WTC11 (cell line): ENCODE measurements at regions of chr12 and their contacts with region 1.

Region 1: DNA sequence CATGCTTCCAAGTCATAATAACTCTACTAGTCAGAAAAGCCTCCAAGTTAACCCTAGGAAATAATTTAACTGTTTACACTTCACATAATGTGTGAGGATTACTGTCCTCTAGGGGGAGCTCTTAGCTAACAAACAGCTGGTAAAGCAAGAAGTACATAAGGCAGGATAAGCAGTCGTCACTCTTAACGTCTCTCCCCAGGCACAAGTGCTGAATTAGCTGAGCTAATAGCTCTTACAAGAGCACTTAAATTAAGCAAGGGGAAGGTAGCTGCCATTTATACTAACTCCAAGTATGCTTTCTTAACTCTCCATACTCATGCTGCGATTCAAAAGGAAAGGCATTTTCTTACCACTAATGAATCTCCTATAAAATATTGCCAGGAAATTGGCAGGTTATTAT is 79.3 kb upstream of the TSPAN11 start:
- DNase-seq: no peak
- ATAC-seq: no peak
- H3K4me3 Mint-ChIP-seq: no peak overlapping the region
- H3K27ac Mint-ChIP-seq: no peak overlapping the region
- H3K4me1 Mint-ChIP-seq: peaks cover 35% of the 10 kb centered on the region
- H3K27me3 Mint-ChIP-seq: peaks cover 4% of the 10 kb centered on the region; the same call in 1 of the 2 replicates
- CTCF ChIP-seq: peak; percentile 50

Region 2: DNA sequence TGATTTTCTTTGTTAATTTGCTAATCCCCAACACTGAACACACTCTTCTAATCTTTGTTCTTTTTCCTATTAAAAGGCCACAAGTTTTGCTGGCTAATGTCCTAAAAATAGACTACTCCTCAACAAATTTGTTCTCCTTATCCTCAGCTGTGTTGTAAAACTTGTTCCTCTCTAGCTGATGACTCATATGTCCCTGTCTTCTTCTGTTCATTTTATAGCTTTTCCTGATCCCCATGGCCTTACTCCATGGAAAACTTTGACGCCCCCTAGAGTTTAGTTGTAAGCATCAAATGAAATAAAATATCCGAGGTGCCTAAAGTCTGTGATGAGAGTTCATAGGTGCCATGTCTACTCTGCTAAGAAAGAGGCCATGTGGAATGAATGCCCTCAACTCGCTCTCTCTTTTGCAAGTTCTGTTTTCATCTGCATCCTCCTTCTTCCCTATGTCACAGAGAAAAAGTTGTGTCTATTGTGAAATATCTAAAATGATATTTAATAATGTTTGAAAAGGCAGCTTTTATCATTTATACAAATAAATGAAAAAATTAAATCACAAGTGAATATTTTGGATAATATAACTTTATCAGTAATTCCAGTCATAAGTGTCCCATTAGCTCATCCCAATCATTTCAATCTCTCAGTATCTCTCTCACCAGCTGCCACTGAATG is 389.5 kb before region 1 on chr12:
- CTCF ChIA-PET with region 1: no interaction called
- POLR2A ChIA-PET with region 1: no interaction called
- DNase-seq: no peak
- ATAC-seq: peak; percentile 66
- H3K4me3 Mint-ChIP-seq: no peak overlapping the region
- H3K27ac Mint-ChIP-seq: no peak overlapping the region
- H3K4me1 Mint-ChIP-seq: no peaks in the 10 kb centered on the region
- H3K27me3 Mint-ChIP-seq: no peaks in the 10 kb centered on the region
- CTCF ChIP-seq: no peak

Region 3: GRCh38 chr12:30806989-30807694 is 40.1 kb before region 1 on chr12:
- CTCF ChIA-PET with region 1: no interaction called
- POLR2A ChIA-PET with region 1: no interaction called
- DNase-seq: peak; percentile 37
- ATAC-seq: peak; percentile 90
- H3K4me3 Mint-ChIP-seq: 0 out of 2 replicates have a peak overlapping the region, but pooled peaks have one; percentile 10
- H3K27ac Mint-ChIP-seq: no peak overlapping the region
- H3K4me1 Mint-ChIP-seq: peaks cover 27% of the 10 kb centered on the region
- H3K27me3 Mint-ChIP-seq: peaks cover 34% of the 10 kb centered on the region
- CTCF ChIP-seq: peak; percentile 47; the same call in 1 of the 2 replicates

Region 4: DNA sequence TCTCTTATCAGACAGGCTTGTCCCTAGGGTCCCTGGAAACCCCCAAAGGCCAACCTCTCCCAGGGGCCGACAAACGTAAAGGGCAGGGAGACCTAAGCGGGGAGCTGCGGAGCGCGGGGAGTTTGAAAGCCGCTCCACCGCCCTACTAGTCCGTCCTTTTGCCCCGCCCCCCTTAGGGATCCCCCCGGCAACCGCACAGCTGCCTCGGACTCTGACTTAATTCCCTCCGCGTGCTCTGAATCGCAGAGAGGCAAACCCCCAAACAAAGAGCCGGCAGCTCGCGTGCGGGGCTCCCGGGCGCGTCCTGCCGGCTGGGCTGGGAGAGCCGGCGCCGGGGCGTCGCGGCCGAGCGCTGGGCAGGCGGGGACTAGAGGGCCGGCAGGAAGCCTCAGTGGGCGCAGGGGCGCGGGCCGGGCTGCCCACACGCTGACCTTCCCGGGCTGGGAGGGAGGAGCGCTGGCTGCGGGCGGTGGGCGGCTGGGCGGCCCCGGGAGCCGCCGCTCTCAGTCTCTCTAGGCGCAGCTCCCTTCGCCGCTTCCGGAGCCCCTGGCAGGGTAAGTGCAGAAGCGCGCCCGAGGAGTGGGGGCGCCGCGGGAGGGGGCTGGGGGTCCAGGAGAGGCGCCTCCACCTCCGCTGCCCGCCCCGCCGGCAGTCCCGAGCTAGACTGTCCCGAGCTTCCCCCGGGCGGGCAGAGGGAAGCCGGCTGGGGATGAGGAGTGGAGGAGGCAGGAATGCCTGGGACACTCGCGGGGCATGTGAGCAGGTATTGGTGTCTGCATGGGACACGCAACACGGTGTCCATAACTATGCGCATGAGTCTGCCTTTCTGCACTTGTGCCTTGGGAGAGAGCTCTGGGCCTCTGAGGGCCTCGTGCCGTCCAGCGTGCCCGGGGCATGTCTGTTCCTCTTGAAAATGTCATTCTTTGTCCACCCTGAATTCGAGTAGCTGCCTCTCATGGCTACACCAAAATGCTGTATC is 79.3 kb after region 1 on chr12 and contains the start of gene TSPAN11:
- CTCF ChIA-PET with region 1: interaction called, 16 read pairs
- POLR2A ChIA-PET with region 1: no interaction called
- DNase-seq: peak; percentile 79
- ATAC-seq: peak; percentile 78
- H3K4me3 Mint-ChIP-seq: peak within 1 kb of the TSS; percentile 62
- H3K27ac Mint-ChIP-seq: no peak within 1 kb of the TSS
- H3K4me1 Mint-ChIP-seq: peaks cover 45% of the 10 kb centered on the region
- H3K27me3 Mint-ChIP-seq: peaks cover 46% of the 10 kb centered on the region
- CTCF ChIP-seq: no peak
- total RNA-seq, gene TSPAN11: 4.6 to 6.1 TPM (median 5.3 TPM) in 3 replicates

Region 5: DNA sequence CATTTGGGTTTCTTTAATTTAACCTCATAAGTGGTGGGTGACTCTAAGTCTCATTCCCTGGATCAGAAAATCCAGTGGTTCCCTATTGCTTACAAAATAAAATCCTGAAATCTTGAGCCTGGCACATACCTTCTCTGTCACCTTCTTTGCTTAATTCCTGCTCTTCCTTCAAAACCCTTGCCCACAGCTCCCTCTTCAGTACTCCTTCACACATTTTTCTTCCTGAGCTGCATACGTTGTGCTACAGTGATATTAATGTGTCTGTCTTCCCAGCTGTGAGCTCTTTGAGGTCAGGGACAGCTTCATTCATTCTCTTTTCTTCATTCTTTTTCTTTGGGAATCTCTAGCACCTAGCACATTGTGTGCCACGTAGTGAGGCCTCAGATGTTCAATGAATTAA is 88.8 kb after region 1 on chr12:
- CTCF ChIA-PET with region 1: interaction called, 13 read pairs
- POLR2A ChIA-PET with region 1: no interaction called
- DNase-seq: no peak
- ATAC-seq: no peak
- H3K4me3 Mint-ChIP-seq: no peak overlapping the region
- H3K27ac Mint-ChIP-seq: no peak overlapping the region
- H3K4me1 Mint-ChIP-seq: peaks cover 9% of the 10 kb centered on the region
- H3K27me3 Mint-ChIP-seq: peaks cover 5% of the 10 kb centered on the region
- CTCF ChIP-seq: no peak

Region 6: DNA sequence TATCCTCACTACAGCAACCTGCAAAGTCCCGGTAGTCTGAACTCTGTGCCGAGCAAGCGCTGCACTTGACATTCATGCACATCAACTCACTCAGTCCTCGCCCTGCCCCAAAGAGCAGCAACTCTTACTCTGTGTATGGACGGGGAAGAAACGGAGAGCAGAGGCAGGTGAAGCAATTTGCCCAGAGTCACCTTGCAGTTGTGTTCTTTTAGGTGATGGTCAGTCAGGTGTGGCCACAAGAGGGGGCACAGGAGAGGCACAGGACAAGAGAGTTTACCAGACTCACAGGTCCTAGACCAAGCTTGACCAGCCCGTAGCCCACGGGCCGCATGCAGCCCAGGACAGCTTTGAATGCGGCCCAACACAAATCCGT is 118.3 kb after region 1 on chr12:
- CTCF ChIA-PET with region 1: interaction called, 13 read pairs
- POLR2A ChIA-PET with region 1: no interaction called
- DNase-seq: peak; percentile 60
- ATAC-seq: peak; percentile 77
- H3K4me3 Mint-ChIP-seq: no peak overlapping the region
- H3K27ac Mint-ChIP-seq: no peak overlapping the region
- H3K4me1 Mint-ChIP-seq: peaks cover 8% of the 10 kb centered on the region; the same call in 1 of the 2 replicates
- H3K27me3 Mint-ChIP-seq: no peaks in the 10 kb centered on the region; the same call in 1 of the 2 replicates
- CTCF ChIP-seq: no peak

Region 7: DNA sequence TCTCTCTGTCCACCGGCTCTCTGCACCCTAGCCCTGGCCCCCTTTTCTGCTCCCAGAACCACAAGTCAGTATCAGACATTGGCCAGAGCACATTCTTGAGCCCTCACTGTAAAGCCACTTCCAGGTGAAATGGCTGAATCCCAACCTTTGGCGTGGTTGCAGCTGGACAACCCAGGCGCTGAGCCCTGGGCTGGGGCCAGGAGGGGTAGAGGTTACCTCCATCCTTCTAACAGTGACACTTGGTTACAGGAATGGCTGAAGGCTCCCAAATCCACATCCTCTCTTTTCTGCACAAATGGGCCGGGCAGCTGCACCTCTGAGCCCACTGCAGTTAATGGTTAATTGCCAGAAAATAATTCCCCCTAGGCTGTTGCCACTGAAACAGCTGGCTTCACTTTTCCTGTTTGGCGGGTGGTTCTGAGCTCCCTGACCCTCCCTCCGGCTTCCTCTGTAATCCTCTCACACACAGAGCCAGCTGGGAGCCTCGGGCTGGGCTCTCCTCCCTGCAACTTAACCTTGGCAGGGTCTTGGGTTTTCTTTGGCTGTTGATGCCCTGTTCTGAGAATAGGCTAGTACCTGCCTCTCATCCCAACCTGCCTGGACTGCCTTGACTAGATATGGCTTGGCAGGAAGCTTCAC is 123.4 kb after region 1 on chr12:
- CTCF ChIA-PET with region 1: interaction called, 13 read pairs
- POLR2A ChIA-PET with region 1: no interaction called
- DNase-seq: no peak
- ATAC-seq: no peak
- H3K4me3 Mint-ChIP-seq: no peak overlapping the region
- H3K27ac Mint-ChIP-seq: no peak overlapping the region
- H3K4me1 Mint-ChIP-seq: peaks cover 18% of the 10 kb centered on the region
- H3K27me3 Mint-ChIP-seq: peaks cover 2% of the 10 kb centered on the region; the same call in 1 of the 2 replicates
- CTCF ChIP-seq: no peak

Region 8: DNA sequence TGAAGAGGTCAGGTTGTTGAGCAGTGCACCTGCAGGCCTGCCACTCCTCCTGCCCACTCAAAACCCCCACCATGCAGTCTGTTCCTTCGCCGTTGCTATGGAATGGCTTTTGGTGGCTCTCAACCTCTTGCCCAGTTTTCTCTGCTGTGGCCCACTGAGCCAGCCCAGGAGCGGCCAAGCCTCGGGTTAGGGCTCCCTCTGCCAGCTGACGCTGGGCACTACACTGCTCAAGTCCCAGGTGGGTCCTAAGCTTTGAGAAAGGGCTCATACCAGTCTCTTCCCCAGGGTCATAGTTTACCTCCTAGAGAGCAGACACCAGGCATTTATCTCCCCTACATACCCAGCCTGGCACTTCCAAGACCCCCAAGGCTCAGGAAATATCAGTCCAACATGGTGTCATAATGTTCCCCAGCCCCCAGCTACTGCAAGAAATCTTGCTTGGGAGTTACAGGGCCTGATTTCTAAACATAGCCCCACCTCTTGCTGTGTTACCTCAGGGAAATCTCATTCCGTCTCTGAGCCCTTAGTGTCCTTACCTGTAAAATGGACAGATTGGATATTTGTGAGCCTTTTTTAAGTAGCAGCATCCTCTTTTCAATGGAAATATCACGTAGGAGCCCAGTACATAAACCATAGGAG is 138.7 kb after region 1 on chr12:
- CTCF ChIA-PET with region 1: interaction called, 66 read pairs
- POLR2A ChIA-PET with region 1: interaction called, 3 read pairs
- DNase-seq: peak; percentile 76
- ATAC-seq: peak; percentile 88
- H3K4me3 Mint-ChIP-seq: no peak overlapping the region
- H3K27ac Mint-ChIP-seq: no peak overlapping the region
- H3K4me1 Mint-ChIP-seq: peaks cover 10% of the 10 kb centered on the region
- H3K27me3 Mint-ChIP-seq: no peaks in the 10 kb centered on the region
- CTCF ChIP-seq: peak; percentile 56; the same call in 1 of the 2 replicates

Region 9: DNA sequence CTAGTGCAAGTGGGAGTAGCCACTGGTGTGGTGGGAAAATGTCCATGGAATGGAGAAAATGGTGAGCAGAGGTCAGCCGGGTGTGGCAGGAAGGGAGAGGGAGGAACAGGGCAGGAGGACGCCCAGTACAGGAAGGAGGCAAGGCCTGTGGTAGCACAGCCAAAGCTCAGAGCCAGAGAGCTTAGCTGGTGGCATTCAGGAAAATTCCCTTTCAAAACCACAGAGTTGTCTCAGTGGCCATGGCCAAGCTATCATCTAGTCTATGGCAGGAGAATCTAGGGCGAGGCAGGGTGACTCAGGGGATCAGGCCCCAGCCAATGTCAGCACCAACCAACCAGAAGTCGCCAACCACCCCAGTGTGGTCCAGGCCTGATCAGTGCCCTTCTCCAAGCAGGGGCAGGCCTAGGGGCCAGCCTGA is 158.7 kb after region 1 on chr12:
- CTCF ChIA-PET with region 1: no interaction called
- POLR2A ChIA-PET with region 1: no interaction called
- DNase-seq: peak; percentile 3
- ATAC-seq: no peak
- H3K4me3 Mint-ChIP-seq: no peak overlapping the region
- H3K27ac Mint-ChIP-seq: no peak overlapping the region
- H3K4me1 Mint-ChIP-seq: peaks cover 3% of the 10 kb centered on the region
- H3K27me3 Mint-ChIP-seq: no peaks in the 10 kb centered on the region; the same call in 1 of the 2 replicates
- CTCF ChIP-seq: no peak